OCI-LY7 (cell line): ENCODE measurements at regions of chr7 and their contacts with region 1.

Region 1: GRCh38 chr7:50304158-50304910 is at the start of gene IKZF1:
- DNase-seq: peak; percentile 70
- H3K4me3 ChIP-seq: peak within 1 kb of the TSS; percentile 71
- H3K27ac ChIP-seq: peak within 1 kb of the TSS; percentile 86
- H3K4me1 ChIP-seq: peaks cover 32% of the 10 kb centered on the region
- CTCF ChIP-seq: no peak
- total RNA-seq, gene IKZF1: 90.0 and 108 TPM in 2 replicates

Region 2: GRCh38 chr7:50206453-50207250 is 97.7 kb before region 1 on chr7:
- CTCF ChIA-PET with region 1: no interaction called
- POLR2A ChIA-PET with region 1: no interaction called
- intact Hi-C with region 1: loop called (anchors 1 kb)
- DNase-seq: no peak
- H3K4me3 ChIP-seq: no peak overlapping the region
- H3K27ac ChIP-seq: no peak overlapping the region
- H3K4me1 ChIP-seq: peaks cover 34% of the 10 kb centered on the region
- CTCF ChIP-seq: no peak

Region 3: DNA sequence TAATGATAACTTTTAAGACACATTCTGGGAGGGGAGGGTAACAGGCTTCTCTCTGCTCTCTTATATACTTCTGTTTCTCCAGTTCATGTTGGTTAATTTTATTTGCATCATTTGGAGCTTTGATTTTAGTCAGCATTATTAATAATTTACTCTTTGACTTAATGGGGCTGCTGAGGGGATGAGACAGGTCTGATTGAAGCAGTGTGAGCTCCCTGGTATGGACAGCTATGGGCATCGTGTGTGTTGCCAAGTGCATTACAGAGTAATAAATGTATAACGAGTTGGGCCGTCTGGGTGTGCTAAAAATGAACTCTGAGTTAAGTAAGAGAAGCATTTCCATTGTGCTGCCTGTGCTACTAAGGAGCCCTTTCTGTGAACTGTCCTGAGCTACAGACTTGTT is 31.5 kb before region 1 on chr7:
- CTCF ChIA-PET with region 1: interaction called, 5 read pairs
- POLR2A ChIA-PET with region 1: interaction called, 17 read pairs
- intact Hi-C with region 1: loop called (anchors 1 kb)
- DNase-seq: no peak
- H3K4me3 ChIP-seq: no peak overlapping the region
- H3K27ac ChIP-seq: no peak overlapping the region
- H3K4me1 ChIP-seq: peaks cover 98% of the 10 kb centered on the region
- CTCF ChIP-seq: no peak

Region 4: DNA sequence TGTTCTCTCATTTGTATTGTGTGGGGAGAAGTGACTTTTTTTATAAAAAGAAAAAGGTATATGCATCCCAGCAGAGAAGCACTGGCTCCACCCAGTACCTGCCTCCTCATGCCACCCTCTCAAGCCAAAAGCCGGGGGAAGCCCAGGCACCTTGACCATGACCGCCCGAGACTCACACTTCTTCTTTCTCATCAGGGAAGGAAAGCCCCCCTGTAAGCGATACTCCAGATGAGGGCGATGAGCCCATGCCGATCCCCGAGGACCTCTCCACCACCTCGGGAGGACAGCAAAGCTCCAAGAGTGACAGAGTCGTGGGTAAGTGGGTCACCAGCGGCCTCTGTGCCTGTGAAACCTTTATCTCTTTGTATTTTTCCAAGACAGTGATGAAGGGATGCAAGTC is 23.1 kb after region 1 on chr7:
- CTCF ChIA-PET with region 1: interaction called, 3 read pairs
- POLR2A ChIA-PET with region 1: interaction called, 83 read pairs
- intact Hi-C with region 1: no loop called
- DNase-seq: no peak
- H3K4me3 ChIP-seq: no peak overlapping the region
- H3K27ac ChIP-seq: no peak overlapping the region
- H3K4me1 ChIP-seq: peaks cover 53% of the 10 kb centered on the region
- CTCF ChIP-seq: no peak

Region 5: DNA sequence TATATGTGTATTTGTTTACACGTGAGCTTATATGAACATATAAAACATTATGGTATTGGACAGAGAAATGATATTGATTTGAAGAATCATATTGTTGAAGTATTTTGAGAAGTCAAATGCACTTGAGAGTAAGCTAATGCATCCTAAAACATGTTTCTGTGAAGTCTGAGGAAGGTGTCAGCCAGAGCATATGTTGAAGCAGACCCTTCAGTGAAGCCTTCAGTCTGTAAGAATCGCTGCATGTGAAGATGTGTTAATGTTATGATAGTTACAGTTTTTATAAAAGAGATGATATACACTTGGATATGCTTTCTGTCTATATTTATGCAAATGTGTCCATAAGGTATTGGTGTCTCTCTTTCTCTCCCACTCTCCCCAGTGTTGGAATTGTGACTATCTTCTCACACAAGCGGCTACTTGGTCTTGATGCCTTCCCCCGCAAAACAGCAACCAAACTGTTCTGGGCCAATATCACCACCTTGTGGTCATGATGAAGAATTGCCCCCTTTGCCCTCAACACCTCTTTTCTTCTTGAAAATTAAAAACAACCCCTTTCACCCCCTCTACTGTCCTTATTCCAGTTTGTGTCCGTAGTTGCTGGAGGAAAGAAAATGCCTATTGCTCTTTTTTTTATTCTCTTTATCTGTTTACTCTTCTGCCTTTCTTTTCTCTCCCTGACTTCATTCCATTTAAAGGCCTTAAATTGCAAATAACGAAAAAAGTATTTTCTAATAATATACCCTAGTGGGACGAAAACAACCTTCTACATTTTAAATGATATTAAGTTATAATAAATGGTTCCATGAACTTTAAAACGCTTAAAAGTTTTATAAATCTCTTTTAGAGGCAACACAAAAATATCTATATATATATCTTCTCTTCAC is 65.1 kb after region 1 on chr7:
- CTCF ChIA-PET with region 1: no interaction called
- POLR2A ChIA-PET with region 1: interaction called, 10 read pairs
- intact Hi-C with region 1: loop called (anchors 1 kb)
- DNase-seq: peak; percentile 83
- H3K4me3 ChIP-seq: no peak overlapping the region
- H3K27ac ChIP-seq: peak overlapping the region; percentile 30
- H3K4me1 ChIP-seq: peaks cover 17% of the 10 kb centered on the region
- CTCF ChIP-seq: peak; percentile 100

Region 6: DNA sequence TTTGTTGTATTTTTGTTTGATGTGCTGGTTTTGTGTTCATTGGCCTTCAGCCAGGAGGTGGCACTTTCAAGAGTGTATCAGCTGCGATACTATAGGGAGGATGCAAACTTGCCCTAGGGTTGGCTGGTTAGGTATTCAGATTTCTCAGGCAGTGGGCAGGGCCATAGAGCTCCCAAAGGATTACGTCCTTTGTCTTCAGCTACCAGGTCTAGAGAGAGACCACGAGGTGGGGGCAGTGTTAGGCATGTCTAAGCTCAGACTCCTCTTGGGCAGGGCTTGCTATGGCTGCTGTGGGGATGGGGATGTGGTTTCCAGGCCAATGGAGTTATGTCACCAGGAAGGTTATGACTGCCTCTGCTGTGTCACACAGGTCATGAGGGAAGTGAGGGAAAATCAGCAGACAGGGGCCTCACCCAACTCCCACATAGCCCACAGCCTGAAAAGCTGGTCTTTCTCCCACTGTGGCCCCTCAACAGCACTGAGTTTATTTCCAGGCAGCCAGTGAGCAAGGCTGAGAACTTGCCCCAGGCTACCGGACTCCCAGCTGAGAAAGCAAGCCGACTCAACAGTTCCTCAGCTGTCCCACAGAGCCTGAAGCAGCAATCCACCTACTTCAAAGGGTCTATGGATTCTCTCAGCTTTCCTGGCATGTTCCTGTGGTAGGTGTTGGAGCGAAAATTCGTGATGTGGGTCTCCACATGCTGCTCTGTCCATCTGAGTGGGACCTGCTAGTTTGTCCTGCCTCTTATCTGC is 1239.6 kb after region 1 on chr7:
- CTCF ChIA-PET with region 1: no interaction called
- POLR2A ChIA-PET with region 1: no interaction called
- intact Hi-C with region 1: no loop called
- DNase-seq: no peak
- H3K4me3 ChIP-seq: no peak overlapping the region
- H3K27ac ChIP-seq: no peak overlapping the region
- H3K4me1 ChIP-seq: no peaks in the 10 kb centered on the region
- CTCF ChIP-seq: no peak